Ascending aorta (tissue), 2 donors: ENCODE measurements at regions of chr10 and their contacts with region 1.

Region 1: DNA sequence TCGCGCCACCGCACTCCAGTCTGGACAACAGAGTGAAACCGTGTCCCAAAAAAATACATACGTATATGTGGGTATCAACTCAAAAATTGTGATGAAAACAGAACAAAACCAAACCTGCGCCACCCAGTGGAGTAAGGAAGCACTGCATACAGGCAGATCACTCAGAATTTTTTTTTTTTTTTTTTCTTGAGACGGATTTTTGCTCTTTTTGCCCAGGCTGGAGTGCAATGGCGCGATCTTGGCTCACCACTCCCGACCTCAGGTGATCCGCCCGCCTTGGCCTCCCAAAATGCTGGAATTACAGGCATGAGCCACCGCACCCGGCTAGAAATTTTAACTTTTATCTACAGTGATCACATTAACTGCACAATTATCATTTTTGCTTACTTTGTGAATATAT is 9.1 kb upstream of the TMEM236 start:
- DNase-seq: peak in 1 of 2 donors; percentile 74
- H3K4me3 ChIP-seq: no peak overlapping the region
- H3K27ac ChIP-seq: no peak overlapping the region
- H3K4me1 ChIP-seq: no peaks in the 10 kb centered on the region
- H3K27me3 ChIP-seq: no peaks in the 10 kb centered on the region
- CTCF ChIP-seq: peak; percentile 67 to 93 (median 91)

Region 2: DNA sequence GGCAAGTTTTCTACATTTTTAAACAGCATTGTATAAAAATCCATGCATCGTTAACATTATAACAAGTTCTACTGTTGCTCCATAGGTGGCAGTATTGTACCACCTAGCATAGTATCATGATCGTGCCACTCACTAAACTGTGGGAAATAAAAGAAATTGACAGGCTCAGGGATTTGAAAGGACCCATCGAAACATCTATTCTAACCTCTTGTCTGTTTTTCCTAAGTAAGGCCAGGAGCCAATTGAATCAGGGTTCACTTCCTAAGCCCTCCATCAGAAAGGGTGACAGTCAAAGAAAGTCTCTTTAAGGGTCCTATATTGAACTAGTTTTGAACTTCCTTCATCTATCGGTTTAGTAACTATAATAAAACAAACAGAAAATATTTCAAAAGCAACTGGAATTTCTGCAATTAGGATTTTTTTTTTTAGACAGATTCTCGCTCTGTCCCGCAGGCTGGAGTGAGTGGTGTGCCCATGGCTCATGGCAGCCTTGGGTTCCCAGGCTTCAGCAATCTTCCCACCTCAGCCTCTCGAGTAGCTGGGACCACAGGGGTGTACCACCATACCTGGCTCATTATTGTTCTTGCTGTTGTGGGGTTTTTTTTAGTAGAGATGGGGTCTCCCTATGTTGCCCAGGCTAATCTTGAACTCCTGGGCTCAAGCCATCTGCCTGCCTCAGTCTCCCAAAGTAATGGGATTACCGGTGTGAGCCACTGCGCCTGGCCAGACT is 135.2 kb before region 1 on chr10:
- intact Hi-C with region 1: loop called (anchors 1 kb)
- DNase-seq: no peak
- H3K4me3 ChIP-seq: no peak overlapping the region
- H3K27ac ChIP-seq: no peak overlapping the region
- H3K4me1 ChIP-seq: no peaks in the 10 kb centered on the region
- H3K27me3 ChIP-seq: no peaks in the 10 kb centered on the region
- CTCF ChIP-seq: peak; percentile 66 to 85 (median 80)

Region 3: GRCh38 chr10:17673456-17674061 is 69.4 kb before region 1 on chr10:
- intact Hi-C with region 1: no loop called
- DNase-seq: no peak
- H3K4me3 ChIP-seq: no peak overlapping the region
- H3K27ac ChIP-seq: no peak overlapping the region
- H3K4me1 ChIP-seq: no peaks in the 10 kb centered on the region
- H3K27me3 ChIP-seq: no peaks in the 10 kb centered on the region
- CTCF ChIP-seq: no peak

Region 4: GRCh38 chr10:17779784-17780183 is 36.9 kb after region 1 on chr10:
- intact Hi-C with region 1: no loop called
- DNase-seq: no peak
- H3K4me3 ChIP-seq: no peak overlapping the region
- H3K27ac ChIP-seq: no peak overlapping the region
- H3K4me1 ChIP-seq: peaks cover 0 to 2% of the 10 kb centered on the region in 2 donors
- H3K27me3 ChIP-seq: no peaks in the 10 kb centered on the region
- CTCF ChIP-seq: no peak